Activated CD8-positive, alpha-beta T cell treated with anti-CD3 and anti-CD28 coated beads for 36 hours (primary cell): ENCODE measurements at regions of chr11 and their contacts with region 1.

Region 1: GRCh38 chr11:73982969-73983740 is 512 bp upstream of the UCP2 start:
- DNase-seq: peak; percentile 97
- ATAC-seq: peak; percentile 85
- H3K4me3 Mint-ChIP-seq: peak overlapping the region; percentile 86
- H3K27ac Mint-ChIP-seq: peak overlapping the region; percentile 95
- H3K4me1 Mint-ChIP-seq: peaks cover 41% of the 10 kb centered on the region
- H3K27me3 Mint-ChIP-seq: no peaks in the 10 kb centered on the region
- CTCF ChIP-seq: no peak

Region 2: DNA sequence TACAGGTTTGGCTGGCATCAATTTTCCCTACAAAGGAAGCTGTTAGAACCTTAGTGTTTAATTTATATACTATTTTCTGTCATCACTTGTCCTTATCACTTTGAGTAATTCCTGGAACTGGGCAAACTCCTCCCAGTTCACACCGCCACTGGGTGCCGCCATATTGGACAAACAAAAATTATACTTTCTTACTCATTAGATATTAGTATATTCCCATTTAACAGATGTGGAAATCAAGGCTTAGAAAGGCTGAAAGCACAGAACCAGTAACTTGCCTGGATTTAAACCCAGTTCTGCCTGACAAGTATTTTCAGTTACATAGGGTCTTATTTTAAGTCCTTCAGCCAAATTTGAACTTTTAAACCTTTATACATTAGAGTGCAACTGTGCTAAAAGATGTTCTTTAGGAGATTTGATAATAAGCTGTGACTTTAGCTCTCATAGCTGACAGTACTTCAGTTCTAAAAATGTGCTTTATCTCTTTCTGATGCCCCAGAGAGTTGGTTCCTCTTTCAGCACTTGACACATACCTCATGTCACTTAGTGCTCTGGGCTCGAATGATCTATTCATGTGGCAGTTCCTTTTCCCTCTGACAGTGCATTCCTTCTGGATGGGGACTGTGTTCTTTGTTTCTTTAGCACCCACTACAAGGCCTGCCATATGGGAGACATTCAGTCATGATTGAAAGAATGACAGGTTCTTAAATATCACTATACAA is 131.9 kb before region 1 on chr11:
- CTCF ChIA-PET with region 1: no interaction called
- POLR2A ChIA-PET with region 1: no interaction called
- intact Hi-C with region 1: no loop called
- DNase-seq: no peak
- ATAC-seq: no peak
- H3K4me3 Mint-ChIP-seq: no peak overlapping the region
- H3K27ac Mint-ChIP-seq: no peak overlapping the region
- H3K4me1 Mint-ChIP-seq: no peaks in the 10 kb centered on the region
- H3K27me3 Mint-ChIP-seq: no peaks in the 10 kb centered on the region
- CTCF ChIP-seq: no peak

Region 3: GRCh38 chr11:73916435-73916834 is 66.7 kb before region 1 on chr11:
- CTCF ChIA-PET with region 1: no interaction called
- POLR2A ChIA-PET with region 1: no interaction called
- intact Hi-C with region 1: no loop called
- DNase-seq: no peak
- ATAC-seq: no peak
- H3K4me3 Mint-ChIP-seq: no peak overlapping the region
- H3K27ac Mint-ChIP-seq: no peak overlapping the region
- H3K4me1 Mint-ChIP-seq: peaks cover 3% of the 10 kb centered on the region
- H3K27me3 Mint-ChIP-seq: no peaks in the 10 kb centered on the region
- CTCF ChIP-seq: no peak

Region 4: DNA sequence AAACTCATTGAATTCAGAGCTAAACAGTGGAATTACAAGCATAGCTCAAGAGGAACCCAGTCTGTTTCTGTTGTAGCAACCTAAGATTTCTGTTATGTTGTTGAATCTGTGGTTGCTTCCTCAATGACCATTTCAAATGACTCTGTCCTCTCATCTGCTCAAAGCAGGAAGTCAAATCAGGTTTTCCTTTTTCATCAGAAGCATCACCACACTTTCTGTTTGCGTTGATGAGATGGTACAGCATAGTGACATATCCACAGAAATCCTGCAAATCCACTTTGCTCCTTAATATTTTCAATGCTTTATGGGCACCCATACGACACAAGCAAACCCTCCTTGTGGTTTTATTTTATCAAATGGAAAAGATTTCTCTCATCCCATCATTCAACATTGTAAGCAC is 12.1 kb after region 1 on chr11:
- CTCF ChIA-PET with region 1: interaction called, 6 read pairs
- POLR2A ChIA-PET with region 1: interaction called, 176 read pairs
- intact Hi-C with region 1: no loop called
- DNase-seq: no peak
- ATAC-seq: peak; percentile 76
- H3K4me3 Mint-ChIP-seq: peak overlapping the region; percentile 74
- H3K27ac Mint-ChIP-seq: peak overlapping the region; percentile 99
- H3K4me1 Mint-ChIP-seq: peaks cover 77% of the 10 kb centered on the region
- H3K27me3 Mint-ChIP-seq: no peaks in the 10 kb centered on the region
- CTCF ChIP-seq: no peak

Region 5: GRCh38 chr11:74011360-74012073 is 28.4 kb after region 1 on chr11:
- CTCF ChIA-PET with region 1: interaction called, 4 read pairs
- POLR2A ChIA-PET with region 1: interaction called, 269 read pairs
- intact Hi-C with region 1: loop called (anchors 5 kb)
- DNase-seq: peak; percentile 76
- ATAC-seq: peak; percentile 81
- H3K4me3 Mint-ChIP-seq: peak overlapping the region; percentile 17
- H3K27ac Mint-ChIP-seq: peak overlapping the region; percentile 98
- H3K4me1 Mint-ChIP-seq: peaks cover 92% of the 10 kb centered on the region
- H3K27me3 Mint-ChIP-seq: no peaks in the 10 kb centered on the region
- CTCF ChIP-seq: no peak

Region 6: GRCh38 chr11:74030723-74031676 is 47.8 kb after region 1 on chr11:
- CTCF ChIA-PET with region 1: interaction called, 4 read pairs
- POLR2A ChIA-PET with region 1: interaction called, 43 read pairs
- intact Hi-C with region 1: no loop called
- DNase-seq: no peak
- ATAC-seq: peak; percentile 67
- H3K4me3 Mint-ChIP-seq: peak overlapping the region; percentile 51
- H3K27ac Mint-ChIP-seq: peak overlapping the region; percentile 86
- H3K4me1 Mint-ChIP-seq: peaks cover 33% of the 10 kb centered on the region
- H3K27me3 Mint-ChIP-seq: no peaks in the 10 kb centered on the region
- CTCF ChIP-seq: no peak